A673 (cell line): ENCODE measurements at regions of chr2 and their contacts with region 1.

Region 1: DNA sequence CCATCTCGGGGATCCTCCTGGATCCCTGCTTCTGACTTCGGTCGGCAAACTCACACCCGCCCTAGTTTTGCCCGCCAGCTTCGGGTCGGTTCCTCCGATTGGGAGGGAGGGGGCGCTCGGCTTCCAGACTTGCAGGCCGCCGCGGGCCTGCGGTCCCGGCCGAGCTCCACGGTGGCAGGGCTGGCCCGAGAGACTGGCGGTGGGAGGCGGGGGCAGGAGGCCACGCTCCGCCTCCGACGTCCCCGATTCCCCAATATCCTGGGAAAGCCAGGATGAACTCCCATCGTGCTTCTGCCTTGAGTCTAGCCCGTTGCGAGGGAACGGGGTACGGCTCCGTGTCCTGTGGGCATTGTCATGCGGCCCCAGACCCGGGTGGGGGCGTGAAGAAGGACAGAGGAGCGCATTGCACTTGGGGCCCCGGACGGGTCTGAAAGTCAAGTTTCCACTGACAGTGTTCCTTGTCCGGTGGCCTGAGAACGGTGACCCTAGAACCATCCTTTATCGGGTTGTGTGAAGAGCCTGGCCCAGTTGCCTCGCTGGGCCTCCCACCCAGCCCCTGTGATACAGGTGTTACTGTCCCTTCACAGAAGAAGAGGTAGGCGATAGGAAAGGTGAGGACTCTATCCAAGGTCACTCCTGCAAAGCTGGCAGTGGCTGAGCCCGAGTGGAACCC is 2.4 kb upstream of the INHBB start:
- DNase-seq: peak; percentile 78
- H3K4me3 ChIP-seq: no peak overlapping the region
- H3K27ac ChIP-seq: no peak overlapping the region
- H3K4me1 ChIP-seq: peaks cover 13% of the 10 kb centered on the region
- H3K27me3 ChIP-seq: peaks cover 63% of the 10 kb centered on the region
- CTCF ChIP-seq: peak; percentile 85

Region 2: DNA sequence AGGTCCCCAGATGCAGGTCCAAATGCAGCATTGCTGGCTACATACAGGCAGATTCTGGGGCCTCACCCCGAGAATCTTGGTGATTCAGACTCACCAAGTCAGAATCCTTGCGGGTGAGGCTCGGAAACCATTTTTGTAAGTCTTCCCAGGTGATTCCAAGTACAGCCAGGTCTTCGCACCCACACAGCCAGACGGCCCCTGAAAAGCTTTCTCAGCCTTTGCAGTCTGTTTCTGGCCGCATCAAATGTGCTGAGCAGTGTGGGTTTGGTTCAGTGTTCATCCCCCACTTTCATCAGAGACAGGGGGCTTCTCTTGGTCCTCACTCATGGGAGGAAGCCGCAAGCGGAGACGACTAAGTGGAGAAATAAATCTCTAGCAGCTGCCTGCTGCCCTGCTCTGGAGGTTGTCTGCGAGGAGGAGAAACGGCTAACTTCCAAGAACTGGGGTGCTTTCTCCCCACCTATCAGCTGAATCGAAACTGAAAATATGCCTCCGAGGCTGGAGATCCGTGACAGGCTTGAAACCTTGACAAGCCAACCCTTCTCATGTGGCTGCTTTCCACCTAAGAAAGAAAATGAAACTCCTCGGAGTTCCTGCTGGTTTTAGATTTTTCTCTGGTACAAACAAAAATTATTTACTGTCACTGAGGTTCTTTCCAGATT is 111.5 kb before region 1 on chr2:
- CTCF ChIA-PET with region 1: no interaction called
- POLR2A ChIA-PET with region 1: no interaction called
- intact Hi-C with region 1: no loop called
- DNase-seq: no peak
- H3K4me3 ChIP-seq: no peak overlapping the region
- H3K27ac ChIP-seq: no peak overlapping the region
- H3K4me1 ChIP-seq: no peaks in the 10 kb centered on the region
- H3K27me3 ChIP-seq: no peaks in the 10 kb centered on the region
- CTCF ChIP-seq: no peak

Region 3: DNA sequence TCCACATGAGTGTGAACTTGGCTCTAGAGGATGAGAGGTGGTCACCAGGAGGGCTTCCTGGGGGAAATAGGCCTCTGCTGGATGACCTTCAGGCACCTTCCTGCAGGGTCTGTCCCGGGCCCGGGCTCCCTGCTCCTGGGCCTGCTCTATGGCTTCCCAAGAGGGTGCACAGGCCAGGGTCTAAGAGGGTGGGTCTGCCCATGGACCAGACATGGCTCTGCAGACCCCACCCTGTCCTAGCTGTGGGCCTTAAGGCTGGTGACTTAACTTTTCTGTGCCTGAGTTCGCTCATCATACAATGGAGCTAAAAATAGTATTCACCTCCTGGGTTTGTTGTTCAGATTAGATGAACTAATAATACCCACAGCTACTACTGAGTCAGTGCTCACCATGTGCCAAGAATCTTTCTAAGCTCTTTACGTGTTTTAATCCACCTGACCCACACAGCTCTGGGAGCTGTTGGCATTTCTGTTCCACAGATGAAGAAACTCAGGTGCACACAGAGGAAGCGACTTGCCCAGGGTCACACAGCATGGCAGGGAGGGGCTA is 16.8 kb after region 1 on chr2:
- CTCF ChIA-PET with region 1: no interaction called
- POLR2A ChIA-PET with region 1: no interaction called
- intact Hi-C with region 1: no loop called
- DNase-seq: no peak
- H3K4me3 ChIP-seq: no peak overlapping the region
- H3K27ac ChIP-seq: no peak overlapping the region
- H3K4me1 ChIP-seq: no peaks in the 10 kb centered on the region
- H3K27me3 ChIP-seq: no peaks in the 10 kb centered on the region
- CTCF ChIP-seq: no peak

Region 4: DNA sequence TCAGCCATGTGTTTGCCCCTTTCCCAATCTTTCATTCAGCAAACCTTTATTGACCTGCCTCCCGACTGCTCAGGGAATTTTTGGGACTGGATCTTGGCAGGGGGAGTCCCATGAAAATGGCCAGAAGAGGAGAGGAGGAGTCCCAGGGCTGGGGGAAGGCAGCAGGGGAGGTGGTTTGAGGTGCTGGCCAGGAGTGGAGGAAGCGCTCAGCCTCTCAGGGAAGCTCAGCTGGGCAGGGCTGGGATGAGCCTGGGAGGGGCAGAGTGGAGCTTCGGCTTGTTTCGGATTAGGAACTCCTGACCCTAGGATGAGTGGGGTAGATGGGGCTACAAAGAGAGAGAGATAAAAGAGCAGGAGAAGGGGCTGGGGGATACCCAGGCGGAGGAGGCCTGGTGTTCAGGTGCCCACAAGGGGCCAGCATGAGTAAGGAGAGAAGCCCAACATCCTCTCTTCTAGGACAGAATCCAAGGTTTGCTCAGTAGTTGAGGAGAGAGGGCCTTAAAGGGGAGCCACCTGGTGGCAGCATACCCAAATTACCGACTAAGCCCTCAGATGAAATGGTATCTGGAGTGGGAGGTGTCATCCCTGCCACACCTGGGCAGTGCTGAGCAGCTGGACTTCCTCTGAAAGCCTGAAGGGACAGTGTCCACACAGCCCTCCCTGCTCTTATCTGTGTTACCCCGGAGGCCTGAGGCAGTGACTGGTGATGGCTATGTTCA is 93.5 kb after region 1 on chr2:
- CTCF ChIA-PET with region 1: interaction called, 3 read pairs
- POLR2A ChIA-PET with region 1: no interaction called
- intact Hi-C with region 1: loop called (anchors 2 kb)
- DNase-seq: peak; percentile 26
- H3K4me3 ChIP-seq: no peak overlapping the region
- H3K27ac ChIP-seq: no peak overlapping the region
- H3K4me1 ChIP-seq: no peaks in the 10 kb centered on the region
- H3K27me3 ChIP-seq: peaks cover 12% of the 10 kb centered on the region
- CTCF ChIP-seq: peak; percentile 51

Region 5: DNA sequence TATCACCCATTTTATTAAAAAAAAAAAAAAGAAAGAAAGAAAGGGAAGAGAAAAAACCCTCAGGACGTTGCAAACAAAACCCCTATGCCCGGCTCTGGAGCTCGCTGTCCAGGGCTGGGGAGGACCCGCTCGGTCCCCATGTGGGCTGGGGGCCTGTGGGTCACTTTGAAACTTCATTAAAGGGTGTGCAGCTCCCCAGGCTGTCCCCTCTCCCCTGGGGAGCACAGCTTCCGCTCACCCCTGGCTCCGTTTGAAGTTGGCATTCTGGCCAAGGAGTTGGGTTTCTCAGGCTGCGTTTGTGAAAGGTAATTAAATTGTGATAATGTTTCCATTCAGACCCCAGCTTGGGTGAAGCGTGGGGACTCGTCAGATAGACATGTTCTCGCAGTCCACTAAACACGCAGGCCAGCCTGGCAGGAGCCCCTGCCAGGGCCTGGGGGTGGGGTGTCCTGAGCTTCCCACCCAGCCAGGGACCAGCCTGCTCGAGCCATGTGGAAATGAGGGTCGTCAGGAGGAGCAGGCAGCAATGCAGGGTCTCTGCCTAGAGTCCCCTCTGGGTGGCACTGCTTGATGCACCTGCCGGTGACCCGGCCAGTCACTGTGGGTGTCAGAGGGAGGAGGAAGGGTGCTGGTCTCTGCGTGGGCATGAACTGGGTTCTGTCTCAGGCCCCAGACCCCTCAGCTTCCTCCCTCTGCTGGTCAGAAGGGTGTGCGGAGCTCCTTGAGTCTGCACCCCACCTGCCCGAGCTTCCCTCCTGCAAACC is 168.6 kb after region 1 on chr2:
- CTCF ChIA-PET with region 1: no interaction called
- POLR2A ChIA-PET with region 1: no interaction called
- intact Hi-C with region 1: loop called (anchors 10 kb)
- DNase-seq: no peak
- H3K4me3 ChIP-seq: no peak overlapping the region
- H3K27ac ChIP-seq: no peak overlapping the region
- H3K4me1 ChIP-seq: no peaks in the 10 kb centered on the region
- H3K27me3 ChIP-seq: no peaks in the 10 kb centered on the region
- CTCF ChIP-seq: no peak

Region 6: GRCh38 chr2:120680136-120680761 is 336.7 kb after region 1 on chr2:
- CTCF ChIA-PET with region 1: interaction called, 4 read pairs
- POLR2A ChIA-PET with region 1: no interaction called
- intact Hi-C with region 1: loop called (anchors 2 kb)
- DNase-seq: peak; percentile 88
- H3K4me3 ChIP-seq: no peak overlapping the region
- H3K27ac ChIP-seq: no peak overlapping the region
- H3K4me1 ChIP-seq: no peaks in the 10 kb centered on the region
- H3K27me3 ChIP-seq: no peaks in the 10 kb centered on the region
- CTCF ChIP-seq: peak; percentile 74